GM12878 (cell line): ENCODE measurements at regions of chr11 and their contacts with region 1.

Region 1: DNA sequence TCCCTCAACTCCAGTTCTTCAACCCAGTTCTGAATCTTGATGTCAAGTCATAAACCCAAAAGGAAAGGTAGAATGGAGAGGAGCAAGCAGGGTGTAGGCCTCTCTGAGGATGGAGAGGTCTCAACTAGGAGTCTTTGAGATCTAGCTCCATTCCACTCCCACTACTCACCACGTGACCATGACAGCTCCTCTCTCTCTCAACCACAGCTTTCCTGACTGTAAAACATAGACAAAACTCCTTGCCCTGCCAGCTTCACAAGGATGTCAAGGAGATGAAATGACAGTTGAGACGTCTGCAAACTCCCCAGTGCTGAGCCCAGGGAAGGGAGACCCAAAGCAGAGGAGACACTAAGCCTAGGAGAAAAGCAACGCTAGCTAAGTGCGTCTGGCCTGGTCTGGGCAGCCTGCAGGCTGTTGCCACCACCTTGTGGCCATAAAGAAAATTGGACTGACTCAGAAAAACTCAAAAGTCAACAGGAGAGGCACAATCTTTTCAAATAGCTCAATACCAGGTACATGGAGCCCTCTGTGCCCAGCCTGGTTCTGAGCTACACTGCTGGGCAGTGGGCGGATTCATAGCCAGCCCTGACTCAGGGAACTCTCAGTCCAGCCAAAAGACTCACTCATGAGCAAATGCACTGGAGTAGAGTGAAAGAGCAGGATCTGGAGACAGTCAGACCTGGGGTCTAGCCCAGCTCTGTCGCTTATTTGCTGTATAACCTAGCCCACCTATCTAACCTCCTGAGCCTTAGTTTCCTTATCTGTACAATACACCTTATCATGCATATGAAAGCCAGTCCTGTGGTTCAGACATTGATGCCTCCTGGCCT is 3.4 kb downstream of the CLPB start:
- DNase-seq: no peak
- ATAC-seq: peak; percentile 63
- H3K4me3 ChIP-seq: no peak overlapping the region
- H3K27ac ChIP-seq: peak overlapping the region; percentile 24; the same call in 1 of the 2 replicates
- H3K4me1 ChIP-seq: peaks cover 12% of the 10 kb centered on the region
- H3K27me3 ChIP-seq: no peaks in the 10 kb centered on the region
- CTCF ChIP-seq: peak; percentile 79 to 94 (median 92)
- EP300 ChIP-seq: no peak
- POLR2A ChIP-seq: no peak
- RAD21 ChIP-seq: peak; percentile 89

Region 2: GRCh38 chr11:71787098-71787823 is 643.7 kb before region 1 on chr11:
- CTCF ChIA-PET with region 1: no interaction called
- POLR2A ChIA-PET with region 1: no interaction called
- RAD21 ChIA-PET with region 1: no interaction called
- SMC1A ChIA-PET with region 1: no interaction called
- in situ Hi-C with region 1: loop called (anchors 10 kb)
- intact Hi-C with region 1: no loop called
- DNase-seq: peak; percentile 82
- ATAC-seq: peak; percentile 100
- H3K4me3 ChIP-seq: peak overlapping the region; percentile 49; the same call in 1 of the 2 replicates
- H3K27ac ChIP-seq: peak overlapping the region; percentile 56; the same call in 1 of the 2 replicates
- H3K4me1 ChIP-seq: no peaks in the 10 kb centered on the region; the same call in 1 of the 2 replicates
- H3K27me3 ChIP-seq: no peaks in the 10 kb centered on the region
- CTCF ChIP-seq: no peak
- EP300 ChIP-seq: no peak
- POLR2A ChIP-seq: 0 out of 2 replicates have a peak, but pooled peaks have one; percentile 42
- RAD21 ChIP-seq: no peak

Region 3: DNA sequence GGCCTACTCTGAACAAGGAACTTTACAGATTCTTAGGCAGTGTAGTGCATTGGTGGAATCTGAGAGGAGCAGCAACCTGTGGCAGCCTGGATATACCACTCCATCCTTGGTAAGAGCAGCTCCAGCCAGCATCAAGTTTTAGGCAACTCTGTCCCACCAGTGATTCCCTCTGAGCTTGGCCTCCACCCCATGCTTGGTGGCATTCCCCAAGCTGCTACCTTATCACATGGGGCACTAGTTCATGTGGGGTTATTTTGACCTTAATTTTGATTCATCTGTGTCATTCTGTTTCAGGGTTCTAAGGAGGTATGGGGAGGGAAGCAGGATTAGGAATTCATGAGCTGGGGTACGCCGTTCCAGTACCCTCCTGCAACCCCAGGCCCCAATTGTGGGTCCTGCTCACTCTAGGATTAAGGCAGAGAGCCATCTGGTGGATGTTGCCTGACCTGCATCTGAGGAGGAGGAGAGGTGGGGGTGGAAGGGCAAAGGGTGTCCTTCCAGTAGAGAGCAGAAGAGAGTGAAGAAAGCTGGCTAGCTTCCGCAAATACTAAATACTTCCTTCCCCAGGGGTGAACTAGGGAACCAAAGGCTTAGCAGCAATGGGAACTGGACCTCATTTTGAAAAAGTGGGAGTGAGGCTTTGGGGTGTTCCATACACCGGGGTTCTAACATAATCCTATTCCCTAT is 339.8 kb before region 1 on chr11:
- CTCF ChIA-PET with region 1: interaction called, 34 read pairs
- POLR2A ChIA-PET with region 1: interaction called, 3 read pairs
- RAD21 ChIA-PET with region 1: interaction called, 10 read pairs
- SMC1A ChIA-PET with region 1: interaction called, 10 read pairs
- in situ Hi-C with region 1: no loop called
- intact Hi-C with region 1: no loop called
- DNase-seq: no peak
- ATAC-seq: peak; percentile 99
- H3K4me3 ChIP-seq: no peak overlapping the region
- H3K27ac ChIP-seq: no peak overlapping the region
- H3K4me1 ChIP-seq: no peaks in the 10 kb centered on the region
- H3K27me3 ChIP-seq: no peaks in the 10 kb centered on the region
- CTCF ChIP-seq: peak; percentile 84 to 91 (median 89)
- EP300 ChIP-seq: no peak
- POLR2A ChIP-seq: peak; percentile 33
- RAD21 ChIP-seq: peak; percentile 93

Region 4: DNA sequence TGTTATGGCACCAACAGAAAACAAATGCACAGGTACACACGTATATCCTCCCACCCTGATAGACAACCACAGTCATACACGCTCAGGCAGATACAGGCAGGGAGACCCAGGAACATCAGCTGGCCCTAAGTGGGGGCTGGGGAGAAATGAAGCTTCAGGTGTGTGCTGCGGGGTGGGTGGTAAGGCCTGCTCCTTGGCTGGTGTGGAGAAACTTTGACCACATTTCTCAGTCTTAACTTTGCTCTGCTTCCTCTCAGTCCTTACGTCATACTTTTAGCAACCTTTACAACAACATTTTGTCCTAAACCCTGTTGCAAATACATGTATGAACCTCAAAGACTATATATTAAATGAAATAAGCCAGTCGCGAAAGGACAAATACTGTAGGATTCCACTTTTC is 311.8 kb before region 1 on chr11:
- CTCF ChIA-PET with region 1: no interaction called
- POLR2A ChIA-PET with region 1: no interaction called
- RAD21 ChIA-PET with region 1: no interaction called
- SMC1A ChIA-PET with region 1: no interaction called
- in situ Hi-C with region 1: no loop called
- intact Hi-C with region 1: no loop called
- DNase-seq: no peak
- ATAC-seq: peak; percentile 27; the same call in 2 of the 3 replicates
- H3K4me3 ChIP-seq: no peak overlapping the region
- H3K27ac ChIP-seq: no peak overlapping the region
- H3K4me1 ChIP-seq: no peaks in the 10 kb centered on the region
- H3K27me3 ChIP-seq: no peaks in the 10 kb centered on the region
- CTCF ChIP-seq: no peak
- EP300 ChIP-seq: no peak
- POLR2A ChIP-seq: no peak
- RAD21 ChIP-seq: no peak

Region 5: GRCh38 chr11:72179804-72180396 is 251.1 kb before region 1 on chr11:
- CTCF ChIA-PET with region 1: interaction called, 21 read pairs
- POLR2A ChIA-PET with region 1: no interaction called
- RAD21 ChIA-PET with region 1: interaction called, 4 read pairs
- SMC1A ChIA-PET with region 1: interaction called, 5 read pairs
- in situ Hi-C with region 1: no loop called
- intact Hi-C with region 1: no loop called
- DNase-seq: no peak
- ATAC-seq: no peak
- H3K4me3 ChIP-seq: no peak overlapping the region
- H3K27ac ChIP-seq: no peak overlapping the region
- H3K4me1 ChIP-seq: peaks cover 5% of the 10 kb centered on the region; the same call in 1 of the 2 replicates
- H3K27me3 ChIP-seq: no peaks in the 10 kb centered on the region; a peak in 1 of 4 replicates
- CTCF ChIP-seq: no peak
- EP300 ChIP-seq: no peak
- POLR2A ChIP-seq: no peak
- RAD21 ChIP-seq: no peak

Region 6: GRCh38 chr11:72274435-72274834 is 156.5 kb before region 1 on chr11:
- CTCF ChIA-PET with region 1: interaction called, 3 read pairs
- POLR2A ChIA-PET with region 1: no interaction called
- RAD21 ChIA-PET with region 1: no interaction called
- SMC1A ChIA-PET with region 1: interaction called, 13 read pairs
- in situ Hi-C with region 1: no loop called
- intact Hi-C with region 1: loop called (anchors 5 kb)
- DNase-seq: no peak
- ATAC-seq: no peak
- H3K4me3 ChIP-seq: no peak overlapping the region
- H3K27ac ChIP-seq: no peak overlapping the region
- H3K4me1 ChIP-seq: 0 out of 2 replicates have a peak, but pooled peaks cover 2% of the 10 kb centered on the region
- H3K27me3 ChIP-seq: no peaks in the 10 kb centered on the region; a peak in 1 of 4 replicates
- CTCF ChIP-seq: no peak
- EP300 ChIP-seq: no peak
- POLR2A ChIP-seq: no peak
- RAD21 ChIP-seq: no peak

Region 7: GRCh38 chr11:72333661-72334060 is 97.3 kb before region 1 on chr11:
- CTCF ChIA-PET with region 1: interaction called, 16 read pairs
- POLR2A ChIA-PET with region 1: no interaction called
- RAD21 ChIA-PET with region 1: interaction called, 9 read pairs
- SMC1A ChIA-PET with region 1: interaction called, 8 read pairs
- in situ Hi-C with region 1: no loop called
- intact Hi-C with region 1: loop called (anchors 5 kb)
- DNase-seq: no peak
- ATAC-seq: peak; percentile 34
- H3K4me3 ChIP-seq: no peak overlapping the region
- H3K27ac ChIP-seq: no peak overlapping the region
- H3K4me1 ChIP-seq: no peaks in the 10 kb centered on the region
- H3K27me3 ChIP-seq: no peaks in the 10 kb centered on the region
- CTCF ChIP-seq: no peak
- EP300 ChIP-seq: no peak
- POLR2A ChIP-seq: no peak
- RAD21 ChIP-seq: no peak

Region 8: GRCh38 chr11:72446902-72447769 is 16.2 kb after region 1 on chr11:
- CTCF ChIA-PET with region 1: interaction called, 119 read pairs
- POLR2A ChIA-PET with region 1: no interaction called
- RAD21 ChIA-PET with region 1: interaction called, 12 read pairs
- SMC1A ChIA-PET with region 1: interaction called, 13 read pairs
- in situ Hi-C with region 1: no loop called
- intact Hi-C with region 1: no loop called
- DNase-seq: no peak
- ATAC-seq: peak; percentile 77
- H3K4me3 ChIP-seq: no peak overlapping the region
- H3K27ac ChIP-seq: no peak overlapping the region
- H3K4me1 ChIP-seq: no peaks in the 10 kb centered on the region
- H3K27me3 ChIP-seq: no peaks in the 10 kb centered on the region; a peak in 1 of 4 replicates
- CTCF ChIP-seq: peak; percentile 61 to 84 (median 75)
- EP300 ChIP-seq: no peak
- POLR2A ChIP-seq: no peak
- RAD21 ChIP-seq: peak; percentile 63